ENCODE measurements at regions of chr1 and their contacts with region 1.

Region 1: GRCh38 chr1:117605774-117606648 is at the start of gene TENT5C:
- DNase-seq: peak; percentile 99
- H3K4me3 ChIP-seq: peak within 1 kb of the TSS; percentile 55 to 82 (median 68)
- H3K27ac ChIP-seq: peak within 1 kb of the TSS; percentile 75 to 89 (median 88)
- H3K4me1 ChIP-seq: peaks cover 0 to 35% (median 27%) of the 10 kb centered on the region in 4 donors
- H3K27me3 ChIP-seq: no peaks in the 10 kb centered on the region
- CTCF ChIP-seq: no peak
- EP300 ChIP-seq: peak in 1 of 4 donors; percentile 42
- POLR2A ChIP-seq: peak; percentile 72 to 75
- total RNA-seq, gene TENT5C: 2.8 to 7.1 (median 5.1) TPM

Region 2: GRCh38 chr1:117367047-117368018 is 238.7 kb before region 1 on chr1 and contains the start of gene MAN1A2:
- intact Hi-C with region 1: loop called (anchors 10 kb)
- DNase-seq: peak; percentile 95
- H3K4me3 ChIP-seq: peak within 1 kb of the TSS; percentile 79 to 88 (median 83)
- H3K27ac ChIP-seq: peak within 1 kb of the TSS; percentile 97 to 99 (median 98)
- H3K4me1 ChIP-seq: peaks cover 0 to 66% (median 54%) of the 10 kb centered on the region in 4 donors
- H3K27me3 ChIP-seq: no peaks in the 10 kb centered on the region
- CTCF ChIP-seq: no peak
- EP300 ChIP-seq: no peak
- POLR2A ChIP-seq: peak; percentile 65 to 82
- total RNA-seq, gene MAN1A2: 36.8 to 52.8 (median 43.4) TPM

Region 3: DNA sequence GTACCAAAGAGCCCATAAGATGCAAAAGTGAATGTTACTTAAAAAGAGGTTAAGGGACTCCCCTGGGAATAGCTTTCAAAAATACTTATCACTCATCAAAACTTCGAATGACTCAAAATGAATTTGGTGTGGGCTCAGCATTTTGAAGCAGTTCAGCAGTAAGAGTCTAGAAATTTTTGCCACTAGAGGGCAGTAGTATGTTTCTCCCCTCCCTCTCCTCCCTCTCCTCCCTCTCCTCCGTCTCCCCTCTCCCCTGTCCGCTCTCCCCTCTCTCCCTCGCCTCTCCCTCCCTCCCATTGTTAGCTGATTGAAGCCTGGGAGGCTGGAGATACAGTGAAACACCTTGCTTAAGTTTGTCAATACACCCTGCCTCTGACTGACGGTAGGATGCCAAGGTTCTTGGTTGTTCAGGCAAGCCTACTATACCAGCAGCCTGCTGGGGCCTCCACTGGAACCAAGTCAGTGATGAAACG is 71.0 kb before region 1 on chr1:
- intact Hi-C with region 1: loop called (anchors 2 kb)
- DNase-seq: no peak
- H3K4me3 ChIP-seq: no peak overlapping the region
- H3K27ac ChIP-seq: no peak overlapping the region
- H3K4me1 ChIP-seq: no peaks in the 10 kb centered on the region
- H3K27me3 ChIP-seq: no peaks in the 10 kb centered on the region
- CTCF ChIP-seq: peak; percentile 50 to 74 (median 70)
- EP300 ChIP-seq: no peak
- POLR2A ChIP-seq: no peak

Region 4: GRCh38 chr1:117783606-117784396 is 177.8 kb after region 1 on chr1:
- intact Hi-C with region 1: no loop called
- DNase-seq: no peak
- H3K4me3 ChIP-seq: no peak overlapping the region
- H3K27ac ChIP-seq: no peak overlapping the region
- H3K4me1 ChIP-seq: peaks cover 0 to 14% (median 8%) of the 10 kb centered on the region in 4 donors
- H3K27me3 ChIP-seq: no peaks in the 10 kb centered on the region
- CTCF ChIP-seq: no peak
- EP300 ChIP-seq: no peak
- POLR2A ChIP-seq: no peak

Region 5: DNA sequence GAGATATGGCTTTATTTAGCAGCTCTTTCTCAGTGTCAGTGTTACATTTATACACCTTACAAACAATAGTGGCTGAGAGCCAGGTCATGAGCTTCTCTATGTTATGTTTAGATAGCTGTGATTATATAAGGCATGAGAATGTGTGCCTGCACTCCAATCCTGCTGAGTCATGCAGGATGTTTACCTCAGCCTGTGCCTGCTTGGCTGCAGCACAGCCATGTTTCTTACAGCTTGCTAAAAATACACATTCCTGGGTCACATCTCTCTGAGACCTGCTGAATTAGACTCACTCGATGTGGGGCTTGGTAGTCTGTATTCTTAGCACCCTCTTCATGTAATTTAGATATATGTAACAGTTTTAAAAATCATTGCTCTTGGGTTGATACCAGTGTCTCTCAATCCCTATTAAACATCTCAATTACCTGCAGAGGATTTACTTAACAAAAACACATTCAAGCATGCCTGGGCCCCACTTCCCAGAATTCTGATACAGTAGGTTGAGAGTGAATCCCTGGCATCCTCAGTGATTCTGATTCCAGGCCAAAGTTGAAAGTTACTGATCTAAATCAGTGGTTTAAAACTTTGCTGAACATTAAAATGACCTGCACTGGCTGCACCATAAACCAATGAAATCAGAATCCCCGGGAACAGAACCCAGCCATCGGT is 215.9 kb after region 1 on chr1:
- intact Hi-C with region 1: loop called (anchors 10 kb)
- DNase-seq: peak; percentile 82
- H3K4me3 ChIP-seq: no peak overlapping the region
- H3K27ac ChIP-seq: peak overlapping the region; percentile 78 to 86 (median 82)
- H3K4me1 ChIP-seq: peaks cover 0 to 57% (median 41%) of the 10 kb centered on the region in 4 donors
- H3K27me3 ChIP-seq: no peaks in the 10 kb centered on the region
- CTCF ChIP-seq: no peak
- EP300 ChIP-seq: peak in 3 of 4 donors; percentile 33 to 84 (median 70)
- POLR2A ChIP-seq: no peak

Measured in sigmoid colon (tissue), 7 donors.